CD8-positive, alpha-beta memory T cell (primary cell): ENCODE measurements at regions of chr7 and their contacts with region 1.

Region 1: DNA sequence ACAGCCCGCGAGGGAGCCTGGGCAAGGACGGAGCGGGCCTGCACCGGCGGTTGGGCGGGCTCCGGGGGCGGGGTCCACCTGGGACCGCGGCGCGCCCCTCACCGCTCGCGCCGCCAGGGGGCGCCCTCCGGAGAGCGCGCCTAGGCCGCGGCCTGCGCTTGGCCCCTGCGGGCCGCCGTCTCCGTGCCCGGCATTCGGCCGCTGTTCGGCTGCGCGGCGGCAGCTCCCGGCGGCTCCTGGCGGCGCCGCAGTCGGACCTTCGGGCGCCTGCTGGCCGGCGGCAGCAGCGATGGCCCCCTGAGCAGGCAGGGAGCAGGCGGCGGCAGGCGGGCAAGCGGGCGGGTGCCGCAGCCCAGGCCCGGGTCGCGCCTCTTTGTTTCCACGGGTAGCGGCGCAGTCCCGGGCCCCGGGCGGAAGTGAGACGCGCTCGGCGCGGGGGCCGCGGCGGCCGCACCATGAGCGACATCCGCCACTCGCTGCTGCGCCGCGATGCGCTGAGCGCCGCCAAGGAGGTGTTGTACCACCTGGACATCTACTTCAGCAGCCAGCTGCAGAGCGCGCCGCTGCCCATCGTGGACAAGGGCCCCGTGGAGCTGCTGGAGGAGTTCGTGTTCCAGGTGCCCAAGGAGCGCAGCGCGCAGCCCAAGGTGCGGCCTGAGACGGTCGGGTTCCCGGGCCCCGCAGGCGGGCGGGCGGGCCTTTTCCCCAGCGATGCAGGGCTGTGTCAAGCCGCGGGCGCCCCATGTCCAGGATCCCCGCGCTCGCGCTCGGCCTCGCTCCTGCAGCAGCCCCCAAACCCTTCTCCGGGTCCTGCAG is at the start of gene INTS15:
- DNase-seq: peak; percentile 77 to 91 (median 86)
- H3K4me3 ChIP-seq: peak within 1 kb of the TSS; percentile 63
- H3K4me3 Mint-ChIP-seq: peak within 1 kb of the TSS; percentile 84 to 97 (median 92)
- H3K27ac ChIP-seq: peak within 1 kb of the TSS; percentile 71
- H3K27ac Mint-ChIP-seq: peak within 1 kb of the TSS; percentile 87 to 98 (median 94)
- H3K4me1 ChIP-seq: peaks cover 19% of the 10 kb centered on the region
- H3K4me1 Mint-ChIP-seq: peaks cover 19 to 32% (median 26%) of the 10 kb centered on the region in 3 donors
- H3K27me3 ChIP-seq: no peaks in the 10 kb centered on the region
- H3K27me3 Mint-ChIP-seq: peaks cover 0 to 2% of the 10 kb centered on the region in 2 donors
- total RNA-seq, gene INTS15: 45.8 to 47.3 TPM

Region 2: GRCh38 chr7:6577365-6578113 is 12.5 kb before region 1 on chr7 and contains the start of gene ZDHHC4:
- CTCF ChIA-PET with region 1: interaction called, 10 read pairs
- POLR2A ChIA-PET with region 1: interaction called, 13 read pairs
- DNase-seq: peak; percentile 78 to 90 (median 85)
- H3K4me3 ChIP-seq: peak within 1 kb of the TSS; percentile 77
- H3K4me3 Mint-ChIP-seq: peak within 1 kb of the TSS; percentile 82 to 93 (median 87)
- H3K27ac ChIP-seq: peak within 1 kb of the TSS; percentile 91
- H3K27ac Mint-ChIP-seq: peak within 1 kb of the TSS; percentile 89 to 98 (median 91)
- H3K4me1 ChIP-seq: peaks cover 10% of the 10 kb centered on the region
- H3K4me1 Mint-ChIP-seq: peaks cover 5 to 38% (median 6%) of the 10 kb centered on the region in 3 donors
- H3K27me3 ChIP-seq: no peaks in the 10 kb centered on the region
- H3K27me3 Mint-ChIP-seq: peaks cover 0 to 4% of the 10 kb centered on the region in 2 donors
- total RNA-seq, gene ZDHHC4: 31.6 to 34.9 TPM

Region 3: DNA sequence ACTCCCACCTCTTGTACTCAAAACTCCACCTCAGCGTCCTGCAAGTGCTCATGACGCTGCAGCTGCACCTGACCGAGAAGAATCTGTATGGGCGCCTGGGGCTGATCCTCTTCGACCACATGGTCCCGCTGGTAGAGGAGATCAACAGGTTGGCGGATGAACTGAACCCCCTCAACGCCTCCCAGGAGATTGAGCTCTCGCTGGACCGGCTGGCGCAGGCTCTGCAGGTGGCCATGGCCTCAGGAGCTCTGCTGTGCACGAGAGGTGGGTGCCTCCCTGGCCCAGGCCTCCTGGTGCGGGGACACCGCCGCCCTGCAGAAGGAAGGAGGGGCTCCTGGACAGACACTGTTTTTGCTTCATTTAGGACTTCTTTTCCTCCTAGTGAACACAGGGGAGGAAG is 10.1 kb after region 1 on chr7:
- CTCF ChIA-PET with region 1: interaction called, 3 read pairs
- POLR2A ChIA-PET with region 1: interaction called, 12 read pairs
- DNase-seq: no peak
- H3K4me3 ChIP-seq: no peak overlapping the region
- H3K4me3 Mint-ChIP-seq: no peak overlapping the region
- H3K27ac ChIP-seq: no peak overlapping the region
- H3K27ac Mint-ChIP-seq: peak overlapping the region in 3 of 8 donors; percentile 14 to 75 (median 46)
- H3K4me1 ChIP-seq: no peaks in the 10 kb centered on the region
- H3K4me1 Mint-ChIP-seq: peaks cover 9 to 19% (median 9%) of the 10 kb centered on the region in 3 donors
- H3K27me3 ChIP-seq: no peaks in the 10 kb centered on the region
- H3K27me3 Mint-ChIP-seq: no peaks in the 10 kb centered on the region

Region 4: GRCh38 chr7:6621195-6622091 is 31.4 kb after region 1 on chr7:
- CTCF ChIA-PET with region 1: interaction called, 21 read pairs
- POLR2A ChIA-PET with region 1: interaction called, 8 read pairs
- DNase-seq: no peak
- H3K4me3 ChIP-seq: peak overlapping the region; percentile 46
- H3K4me3 Mint-ChIP-seq: peak overlapping the region; percentile 73 to 86 (median 79)
- H3K27ac ChIP-seq: no peak overlapping the region
- H3K27ac Mint-ChIP-seq: peak overlapping the region; percentile 54 to 93 (median 82)
- H3K4me1 ChIP-seq: peaks cover 52% of the 10 kb centered on the region
- H3K4me1 Mint-ChIP-seq: peaks cover 47 to 75% (median 49%) of the 10 kb centered on the region in 3 donors
- H3K27me3 ChIP-seq: no peaks in the 10 kb centered on the region
- H3K27me3 Mint-ChIP-seq: peaks cover 0 to 3% of the 10 kb centered on the region in 2 donors

Region 5: DNA sequence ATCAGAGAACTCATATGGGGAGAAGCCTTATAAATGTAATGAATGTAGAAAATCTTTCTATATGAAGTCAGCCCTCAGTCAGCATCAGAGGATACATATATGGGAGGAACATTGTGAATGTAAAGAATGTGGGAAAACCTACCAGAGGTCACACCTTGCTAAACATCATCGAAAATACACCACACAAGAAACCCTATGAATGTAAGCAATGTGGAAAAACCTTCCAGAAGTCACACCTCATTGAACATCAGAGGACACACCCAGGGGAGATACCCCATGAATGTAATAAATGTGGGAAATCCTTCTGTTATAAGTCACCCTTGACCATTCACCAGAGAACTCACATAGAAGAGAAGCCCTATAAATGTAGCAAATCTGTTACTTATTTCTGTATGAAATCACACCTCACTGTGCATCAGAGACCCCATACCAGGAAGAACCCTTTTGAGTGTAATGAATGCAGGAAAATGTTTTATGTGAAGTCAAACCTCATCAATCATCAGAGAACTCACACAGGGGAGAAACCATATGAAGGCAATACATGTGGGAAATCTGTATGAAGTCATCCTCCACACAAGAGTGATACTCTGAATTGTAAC is 85.9 kb after region 1 on chr7:
- CTCF ChIA-PET with region 1: no interaction called
- POLR2A ChIA-PET with region 1: no interaction called
- DNase-seq: no peak
- H3K4me3 ChIP-seq: no peak overlapping the region
- H3K4me3 Mint-ChIP-seq: no peak overlapping the region
- H3K27ac ChIP-seq: no peak overlapping the region
- H3K27ac Mint-ChIP-seq: no peak overlapping the region
- H3K4me1 ChIP-seq: no peaks in the 10 kb centered on the region
- H3K4me1 Mint-ChIP-seq: no peaks in the 10 kb centered on the region
- H3K27me3 ChIP-seq: no peaks in the 10 kb centered on the region
- H3K27me3 Mint-ChIP-seq: no peaks in the 10 kb centered on the region